ENCODE measurements at regions of chr11 and their contacts with region 1.

Region 1: GRCh38 chr11:15655552-15655951 is 540.8 kb downstream of the INSC start:
- DNase-seq: no peak

Region 2: DNA sequence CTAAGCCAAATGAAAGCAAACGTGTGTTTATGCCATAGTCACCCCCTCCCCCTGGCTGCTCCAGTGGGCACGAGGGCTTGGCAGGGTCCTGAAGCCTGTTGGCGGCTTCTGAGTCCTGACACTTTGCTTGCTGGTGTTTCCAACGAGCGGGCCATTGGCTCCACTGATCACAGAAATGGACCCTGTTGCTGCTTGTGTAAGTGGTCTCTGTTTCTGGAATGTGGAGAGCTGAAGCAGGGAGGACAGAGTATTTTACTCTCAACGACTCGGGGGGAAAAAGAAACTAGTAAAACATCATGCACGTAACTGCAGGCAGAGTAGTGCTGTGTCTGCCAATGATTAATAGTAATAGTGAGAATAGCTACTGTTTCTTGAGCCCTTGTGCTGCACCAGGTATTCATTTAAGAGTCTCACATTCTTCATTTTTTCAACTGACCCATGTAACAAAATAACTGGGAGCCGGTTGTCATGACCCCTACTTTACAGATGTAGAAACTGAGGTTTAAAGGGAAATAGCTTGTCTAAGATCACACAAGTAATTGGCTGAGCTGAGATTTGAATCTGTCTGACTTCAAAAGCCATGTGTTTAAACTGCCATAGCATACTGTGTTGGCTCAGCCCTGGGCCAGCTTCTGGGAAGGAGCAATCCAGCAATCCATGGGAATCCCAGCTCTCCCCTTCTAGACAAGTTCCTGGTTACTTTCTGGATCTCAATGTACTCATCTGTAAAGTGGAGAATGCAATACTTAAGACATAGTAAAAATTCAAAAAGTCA is 14.1 kb before region 1 on chr11:
- intact Hi-C with region 1: no loop called
- DNase-seq: no peak

Region 3: GRCh38 chr11:16261836-16262644 is 606.5 kb after region 1 on chr11:
- intact Hi-C with region 1: loop called in 1 of 2 experiments (anchors 5 kb)
- DNase-seq: no peak